Uterus (tissue), 4 donors: ENCODE measurements at regions of chr17 and their contacts with region 1.

Region 1: GRCh38 chr17:49315551-49316257 is 46.3 kb downstream of the ZNF652 start:
- DNase-seq: peak; percentile 62 to 70
- H3K4me3 ChIP-seq: no peak overlapping the region
- H3K27ac ChIP-seq: peak overlapping the region in 1 of 2 donors; percentile 41
- H3K4me1 ChIP-seq: no peaks in the 10 kb centered on the region
- H3K27me3 ChIP-seq: no peaks in the 10 kb centered on the region
- CTCF ChIP-seq: peak; percentile 75 to 93 (median 84)
- POLR2A ChIP-seq: no peak

Region 2: GRCh38 chr17:49390548-49391324 is 75.0 kb after region 1 on chr17:
- intact Hi-C with region 1: loop called (anchors 10 kb)
- DNase-seq: no peak
- H3K4me3 ChIP-seq: no peak overlapping the region
- H3K27ac ChIP-seq: no peak overlapping the region
- H3K4me1 ChIP-seq: no peaks in the 10 kb centered on the region
- H3K27me3 ChIP-seq: no peaks in the 10 kb centered on the region
- CTCF ChIP-seq: no peak
- POLR2A ChIP-seq: no peak